ENCODE measurements at regions of chr5 and their contacts with region 1.

Region 1: DNA sequence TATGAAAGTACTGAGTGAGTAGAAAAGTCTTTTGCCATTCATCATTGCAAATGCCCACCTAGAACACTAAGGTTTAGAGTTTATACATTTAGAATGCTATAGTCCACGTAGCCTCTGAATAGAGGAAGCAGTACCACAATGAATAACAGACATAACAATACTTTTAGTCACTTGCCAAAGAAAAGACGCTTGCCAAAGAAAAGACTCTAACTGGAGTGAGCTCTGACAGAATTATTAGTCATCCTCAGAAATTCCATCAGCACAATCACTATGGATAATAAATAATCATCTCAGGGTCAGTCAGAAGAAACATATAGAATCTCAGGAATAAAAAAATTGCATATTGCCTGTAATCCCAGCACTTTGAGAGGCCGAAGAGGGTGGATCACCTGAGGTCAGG is 168.5 kb upstream of the TARS1 start:
- DNase-seq: peak; percentile 94
- H3K4me3 ChIP-seq: peak overlapping the region in 1 of 3 experiments; percentile 31
- H3K27ac ChIP-seq: peak overlapping the region; percentile 90
- H3K4me1 ChIP-seq: peaks cover 38% of the 10 kb centered on the region
- H3K27me3 ChIP-seq: no peaks in the 10 kb centered on the region
- CTCF ChIP-seq: no peak
- POLR2A ChIP-seq: no peak

Region 2: DNA sequence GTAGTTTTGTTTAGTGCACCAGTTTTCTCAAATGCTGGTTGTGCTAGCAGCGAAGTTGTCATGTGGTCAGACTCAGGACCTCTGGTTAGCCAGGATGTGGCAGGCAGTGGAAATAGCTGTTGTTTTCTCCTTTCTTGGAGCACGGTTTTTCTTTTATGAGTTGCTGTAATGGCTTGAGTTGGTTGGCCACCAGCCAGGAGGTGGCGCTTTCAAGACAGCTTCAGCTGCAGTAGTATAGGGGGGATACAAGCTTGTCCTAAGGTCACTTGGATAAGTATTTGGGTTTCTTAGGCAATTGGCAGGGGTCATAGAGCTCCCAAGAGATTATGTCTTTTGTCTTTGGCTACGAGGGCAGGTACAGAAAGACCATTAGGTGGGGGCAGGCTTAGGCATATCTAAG is 105.8 kb before region 1 on chr5:
- CTCF ChIA-PET with region 1: no interaction called
- POLR2A ChIA-PET with region 1: no interaction called
- dilution Hi-C with region 1: no loop called
- intact Hi-C with region 1: no loop called
- DNase-seq: peak; percentile 17
- H3K4me3 ChIP-seq: no peak overlapping the region
- H3K27ac ChIP-seq: no peak overlapping the region
- H3K4me1 ChIP-seq: no peaks in the 10 kb centered on the region
- H3K27me3 ChIP-seq: no peaks in the 10 kb centered on the region
- CTCF ChIP-seq: no peak
- POLR2A ChIP-seq: no peak

Region 3: DNA sequence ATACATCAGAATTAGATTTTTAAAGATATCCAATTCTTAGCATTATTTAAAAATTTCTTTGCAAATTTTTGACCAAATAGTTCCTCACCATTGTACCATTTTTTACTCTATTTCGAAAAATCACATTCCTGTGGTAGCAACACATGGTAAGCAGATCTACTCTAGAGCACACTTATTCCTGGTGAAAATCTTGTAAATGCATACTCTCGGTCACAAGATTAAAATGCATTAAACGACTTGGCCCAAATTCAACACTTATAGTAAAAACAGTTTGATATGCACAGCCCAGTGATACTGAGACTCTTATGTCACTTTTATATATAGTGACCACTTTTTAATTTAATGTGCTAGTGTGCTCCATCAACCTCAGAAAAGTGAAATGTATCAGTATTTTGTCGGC is 40.4 kb before region 1 on chr5:
- CTCF ChIA-PET with region 1: no interaction called
- POLR2A ChIA-PET with region 1: no interaction called
- dilution Hi-C with region 1: no loop called
- intact Hi-C with region 1: loop called (anchors 1 kb)
- DNase-seq: no peak
- H3K4me3 ChIP-seq: no peak overlapping the region
- H3K27ac ChIP-seq: no peak overlapping the region
- H3K4me1 ChIP-seq: peaks cover 20% of the 10 kb centered on the region
- H3K27me3 ChIP-seq: no peaks in the 10 kb centered on the region
- CTCF ChIP-seq: no peak
- POLR2A ChIP-seq: no peak

Region 4: GRCh38 chr5:33241802-33242201 is 30.5 kb before region 1 on chr5:
- CTCF ChIA-PET with region 1: interaction called, 5 read pairs
- POLR2A ChIA-PET with region 1: no interaction called
- dilution Hi-C with region 1: no loop called
- intact Hi-C with region 1: loop called (anchors 1 kb)
- DNase-seq: peak; percentile 93
- H3K4me3 ChIP-seq: no peak overlapping the region
- H3K27ac ChIP-seq: no peak overlapping the region
- H3K4me1 ChIP-seq: peaks cover 13% of the 10 kb centered on the region
- H3K27me3 ChIP-seq: no peaks in the 10 kb centered on the region
- CTCF ChIP-seq: no peak
- POLR2A ChIP-seq: peak; percentile 32

Region 5: DNA sequence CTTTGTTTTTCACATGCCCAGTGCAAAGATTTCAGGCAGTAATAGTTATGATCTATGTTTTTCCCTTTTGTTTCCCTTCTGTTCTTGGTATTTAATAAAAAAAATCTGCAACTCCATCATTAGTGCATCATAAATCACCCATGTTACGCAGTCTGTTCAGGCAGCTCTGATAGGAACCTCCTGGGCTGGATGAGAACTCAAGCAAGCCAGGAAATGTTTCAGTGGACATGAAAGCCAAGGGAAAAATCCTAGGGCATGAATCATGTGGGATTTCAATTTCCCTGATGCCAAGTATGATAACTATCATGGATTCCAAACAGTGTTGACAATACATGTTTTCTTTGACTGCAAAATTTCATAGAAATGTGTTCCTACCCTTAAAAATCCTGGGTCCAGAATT is 48.7 kb after region 1 on chr5:
- CTCF ChIA-PET with region 1: interaction called, 3 read pairs
- POLR2A ChIA-PET with region 1: no interaction called
- dilution Hi-C with region 1: no loop called
- intact Hi-C with region 1: loop called (anchors 1 kb)
- DNase-seq: peak; percentile 98
- H3K4me3 ChIP-seq: peak overlapping the region in 1 of 3 experiments; percentile 13
- H3K27ac ChIP-seq: peak overlapping the region; percentile 98
- H3K4me1 ChIP-seq: peaks cover 34% of the 10 kb centered on the region
- H3K27me3 ChIP-seq: no peaks in the 10 kb centered on the region
- CTCF ChIP-seq: no peak
- POLR2A ChIP-seq: no peak

Region 6: DNA sequence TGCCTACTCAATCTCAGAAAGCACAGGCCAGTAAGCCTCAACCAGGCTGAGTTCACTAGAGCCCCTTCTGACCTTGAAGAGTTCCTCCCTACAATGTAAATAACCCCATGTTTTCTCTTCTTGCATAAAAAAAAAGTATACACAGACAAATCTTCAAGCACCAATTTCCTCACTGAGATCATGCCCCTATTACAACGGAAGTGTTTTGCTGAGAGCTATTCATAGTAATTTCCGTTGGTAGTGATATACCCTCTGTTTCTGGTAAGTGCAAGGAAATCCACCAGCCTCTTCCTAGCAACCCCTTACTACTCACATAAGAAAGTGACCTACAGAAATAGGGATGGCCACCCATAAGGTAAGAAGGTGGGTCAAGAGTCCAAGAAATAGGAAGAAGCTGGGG is 92.1 kb after region 1 on chr5:
- CTCF ChIA-PET with region 1: no interaction called
- POLR2A ChIA-PET with region 1: no interaction called
- dilution Hi-C with region 1: no loop called
- intact Hi-C with region 1: loop called (anchors 1 kb)
- DNase-seq: peak; percentile 88
- H3K4me3 ChIP-seq: peak overlapping the region in 1 of 3 experiments; percentile 5
- H3K27ac ChIP-seq: peak overlapping the region; percentile 42
- H3K4me1 ChIP-seq: peaks cover 36% of the 10 kb centered on the region
- H3K27me3 ChIP-seq: no peaks in the 10 kb centered on the region
- CTCF ChIP-seq: no peak
- POLR2A ChIP-seq: no peak

Region 7: DNA sequence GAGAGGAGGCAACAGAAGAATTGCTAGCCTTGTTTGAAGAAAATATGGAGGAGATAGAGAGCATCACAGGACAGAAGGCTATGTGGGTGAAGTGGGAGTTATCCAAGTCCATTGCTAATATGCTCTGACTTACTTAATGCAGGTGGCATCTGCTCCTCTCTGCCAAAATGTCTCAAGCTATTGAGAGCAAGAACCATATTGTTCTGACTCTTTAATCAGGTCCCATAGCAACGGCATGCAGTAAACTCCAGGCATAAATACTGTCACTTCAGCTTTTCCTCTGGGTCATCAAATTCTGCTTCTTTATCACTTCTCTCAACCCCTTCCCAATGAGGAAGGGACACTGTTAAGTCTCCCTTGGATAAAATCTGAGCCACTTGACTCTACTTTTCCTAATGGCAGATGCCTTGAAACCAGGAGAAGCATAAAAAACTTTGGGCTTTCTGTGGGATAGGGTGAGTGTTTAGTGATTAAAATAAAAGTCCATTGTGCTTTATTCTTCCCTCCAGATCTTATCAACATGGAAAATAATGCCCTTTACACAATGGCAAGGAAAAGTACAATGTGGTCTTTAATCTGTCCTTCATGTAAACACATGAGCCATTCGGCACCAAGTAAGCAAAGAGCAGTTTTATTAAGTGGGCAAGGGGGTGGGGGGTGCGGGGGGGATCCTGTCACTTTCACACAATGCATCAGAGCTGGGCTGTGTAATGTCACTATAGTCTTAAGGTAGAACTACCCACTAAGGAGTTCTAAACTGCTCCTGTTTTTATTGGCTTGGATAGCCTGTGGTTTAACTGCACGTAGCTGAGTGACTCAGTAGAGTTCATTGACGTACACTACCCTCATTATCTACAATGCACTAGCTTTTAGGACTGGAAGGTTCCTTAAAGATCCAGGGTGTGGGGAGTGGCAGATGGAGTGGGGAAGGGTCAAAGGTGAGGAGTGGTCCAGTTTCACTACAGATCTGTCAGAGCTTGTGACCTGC is 97.5 kb after region 1 on chr5:
- CTCF ChIA-PET with region 1: no interaction called
- POLR2A ChIA-PET with region 1: no interaction called
- dilution Hi-C with region 1: no loop called
- intact Hi-C with region 1: loop called (anchors 1 kb)
- DNase-seq: peak; percentile 92
- H3K4me3 ChIP-seq: no peak overlapping the region
- H3K27ac ChIP-seq: peak overlapping the region; percentile 69
- H3K4me1 ChIP-seq: peaks cover 20% of the 10 kb centered on the region
- H3K27me3 ChIP-seq: no peaks in the 10 kb centered on the region
- CTCF ChIP-seq: no peak
- POLR2A ChIP-seq: no peak

Region 8: GRCh38 chr5:33401482-33402390 is 129.4 kb after region 1 on chr5:
- CTCF ChIA-PET with region 1: no interaction called
- POLR2A ChIA-PET with region 1: no interaction called
- dilution Hi-C with region 1: no loop called
- intact Hi-C with region 1: loop called (anchors 1 kb)
- DNase-seq: peak; percentile 74
- H3K4me3 ChIP-seq: no peak overlapping the region
- H3K27ac ChIP-seq: peak overlapping the region; percentile 60
- H3K4me1 ChIP-seq: peaks cover 27% of the 10 kb centered on the region
- H3K27me3 ChIP-seq: no peaks in the 10 kb centered on the region
- CTCF ChIP-seq: no peak
- POLR2A ChIP-seq: no peak

Region 9: DNA sequence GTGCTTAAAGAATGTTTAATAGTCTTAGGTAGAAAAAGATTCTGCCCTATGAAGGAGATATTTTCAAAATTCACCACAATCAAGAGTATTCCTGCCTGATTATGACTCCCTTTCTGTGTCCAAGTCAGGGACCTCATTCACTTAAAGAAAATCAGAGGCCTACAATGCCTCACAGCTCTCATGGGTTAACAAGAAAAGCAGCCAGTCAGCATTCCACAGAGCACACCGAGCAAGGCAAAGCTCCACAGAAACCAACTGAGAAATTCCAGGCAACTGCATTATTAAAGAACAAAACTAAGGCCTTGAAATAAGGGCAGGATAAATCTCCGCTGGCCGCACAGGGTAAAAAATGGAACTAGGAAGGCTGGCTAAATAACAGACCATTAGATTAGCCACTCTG is 329.6 kb after region 1 on chr5:
- CTCF ChIA-PET with region 1: no interaction called
- POLR2A ChIA-PET with region 1: no interaction called
- dilution Hi-C with region 1: no loop called
- intact Hi-C with region 1: no loop called
- DNase-seq: no peak
- H3K4me3 ChIP-seq: no peak overlapping the region
- H3K27ac ChIP-seq: no peak overlapping the region
- H3K4me1 ChIP-seq: no peaks in the 10 kb centered on the region
- H3K27me3 ChIP-seq: no peaks in the 10 kb centered on the region
- CTCF ChIP-seq: no peak
- POLR2A ChIP-seq: no peak